HepG2 (cell line): ENCODE measurements at regions of chr7 and their contacts with region 1.

Region 1: GRCh38 chr7:36366718-36367560 is 22.7 kb upstream of the ANLN start:
- DNase-seq: peak; percentile 80
- ATAC-seq: peak; percentile 97
- H3K4me3 ChIP-seq: peak overlapping the region; percentile 74 to 91 (median 81)
- H3K27ac ChIP-seq: peak overlapping the region; percentile 67
- H3K4me1 ChIP-seq: peaks cover 37% of the 10 kb centered on the region
- H3K27me3 ChIP-seq: no peaks in the 10 kb centered on the region; a peak in 1 of 5 replicates
- CTCF ChIP-seq: peak; percentile 96
- EP300 ChIP-seq: no peak
- POLR2A ChIP-seq: peak; percentile 59 to 82
- RAD21 ChIP-seq: peak; percentile 89

Region 2: DNA sequence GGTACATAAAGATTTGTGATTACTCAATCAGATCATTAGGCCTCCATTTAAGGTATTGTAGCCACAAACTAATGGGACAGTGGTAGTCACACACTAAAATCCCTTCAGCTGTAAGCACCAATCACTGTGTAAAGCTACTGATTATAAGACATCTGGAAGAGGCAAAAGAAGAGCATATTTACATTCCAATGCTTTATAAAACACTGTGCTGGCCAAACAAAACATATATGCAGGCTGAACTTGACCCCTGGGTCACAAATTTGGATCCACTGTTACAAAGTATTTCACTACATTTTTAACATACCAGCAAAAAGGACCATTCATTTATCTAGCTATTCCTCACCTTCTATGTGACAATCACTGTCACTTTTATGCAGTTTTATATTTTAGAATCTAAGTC is 18.7 kb before region 1 on chr7:
- CTCF ChIA-PET with region 1: no interaction called
- POLR2A ChIA-PET with region 1: no interaction called
- in situ Hi-C with region 1: no loop called
- intact Hi-C with region 1: no loop called
- DNase-seq: no peak
- ATAC-seq: no peak
- H3K4me3 ChIP-seq: no peak overlapping the region
- H3K27ac ChIP-seq: no peak overlapping the region
- H3K4me1 ChIP-seq: peaks cover 11% of the 10 kb centered on the region; the same call in 1 of the 2 replicates
- H3K27me3 ChIP-seq: no peaks in the 10 kb centered on the region
- CTCF ChIP-seq: no peak
- EP300 ChIP-seq: no peak
- POLR2A ChIP-seq: no peak
- RAD21 ChIP-seq: no peak

Region 3: GRCh38 chr7:36389371-36390198 is 22.6 kb after region 1 on chr7 and contains the start of gene ANLN:
- CTCF ChIA-PET with region 1: no interaction called
- POLR2A ChIA-PET with region 1: interaction called, 15 read pairs
- in situ Hi-C with region 1: no loop called
- intact Hi-C with region 1: loop called (anchors 1 kb)
- DNase-seq: peak; percentile 92
- ATAC-seq: peak; percentile 83
- H3K4me3 ChIP-seq: peak within 1 kb of the TSS; percentile 93 to 97 (median 97)
- H3K27ac ChIP-seq: peak within 1 kb of the TSS; percentile 89
- H3K4me1 ChIP-seq: peaks cover 45% of the 10 kb centered on the region
- H3K27me3 ChIP-seq: no peaks in the 10 kb centered on the region; a peak in 1 of 5 replicates
- CTCF ChIP-seq: no peak
- EP300 ChIP-seq: peak in 1 of 2 experiments; percentile 11; a peak in 1 of 4 replicates
- POLR2A ChIP-seq: peak; percentile 71 to 96
- RAD21 ChIP-seq: no peak; the same call in 1 of the 2 replicates
- total RNA-seq, gene ANLN: 38.8 and 72.0 TPM in 2 replicates

Region 4: GRCh38 chr7:36806891-36807290 is 440.0 kb after region 1 on chr7:
- CTCF ChIA-PET with region 1: no interaction called
- POLR2A ChIA-PET with region 1: no interaction called
- in situ Hi-C with region 1: no loop called
- intact Hi-C with region 1: no loop called
- DNase-seq: no peak
- ATAC-seq: no peak
- H3K4me3 ChIP-seq: no peak overlapping the region
- H3K27ac ChIP-seq: no peak overlapping the region
- H3K4me1 ChIP-seq: peaks cover 19% of the 10 kb centered on the region
- H3K27me3 ChIP-seq: no peaks in the 10 kb centered on the region; a peak in 1 of 5 replicates
- CTCF ChIP-seq: no peak
- EP300 ChIP-seq: no peak
- POLR2A ChIP-seq: no peak
- RAD21 ChIP-seq: no peak